ENCODE measurements at regions of chr17 and their contacts with region 1.

Region 1: GRCh38 chr17:31449746-31450145 is 58.3 kb downstream of the RAB11FIP4 start:
- H3K4me3 Mint-ChIP-seq: no peak overlapping the region
- H3K27ac Mint-ChIP-seq: no peak overlapping the region
- H3K4me1 Mint-ChIP-seq: peaks cover 42% of the 10 kb centered on the region
- H3K27me3 Mint-ChIP-seq: peaks cover 12% of the 10 kb centered on the region

Region 2: DNA sequence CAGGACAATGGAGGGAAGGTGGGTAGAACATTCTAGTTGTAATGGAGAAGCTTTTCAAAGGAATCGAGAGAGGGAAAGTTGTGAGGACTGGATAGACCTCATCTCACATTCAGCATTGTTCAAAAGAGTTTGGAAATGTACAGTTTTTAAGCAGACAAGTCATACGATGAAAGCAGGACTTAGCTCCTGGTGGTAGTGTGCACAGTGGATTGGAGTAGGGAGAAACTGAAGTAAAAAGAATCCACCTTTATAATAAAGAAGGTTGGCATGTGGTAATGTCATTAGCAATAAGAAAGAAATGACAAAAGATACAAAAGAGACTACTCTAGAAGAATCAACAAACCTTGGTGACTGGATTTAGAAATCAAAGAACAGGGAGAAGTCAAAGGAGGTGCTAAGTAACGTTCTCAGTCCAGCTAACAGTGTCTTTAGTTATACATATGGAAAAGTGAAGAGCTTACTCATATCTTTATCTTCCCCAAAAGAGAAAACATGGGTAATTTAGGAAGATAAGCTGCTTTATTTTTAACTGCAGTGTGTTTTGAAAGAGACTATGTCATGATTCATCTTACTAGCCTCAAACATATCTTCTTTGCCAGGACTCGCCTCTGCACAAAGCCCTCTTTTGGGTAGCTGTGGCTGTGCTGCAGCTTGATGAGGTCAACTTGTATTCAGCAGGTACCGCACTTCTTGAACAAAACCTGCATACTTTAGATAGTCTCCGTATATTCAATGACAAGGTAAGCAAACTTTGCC is 109.7 kb before region 1 on chr17:
- intact Hi-C with region 1: no loop called
- H3K4me3 Mint-ChIP-seq: no peak overlapping the region
- H3K27ac Mint-ChIP-seq: no peak overlapping the region
- H3K4me1 Mint-ChIP-seq: peaks cover 11% of the 10 kb centered on the region
- H3K27me3 Mint-ChIP-seq: no peaks in the 10 kb centered on the region

Region 3: DNA sequence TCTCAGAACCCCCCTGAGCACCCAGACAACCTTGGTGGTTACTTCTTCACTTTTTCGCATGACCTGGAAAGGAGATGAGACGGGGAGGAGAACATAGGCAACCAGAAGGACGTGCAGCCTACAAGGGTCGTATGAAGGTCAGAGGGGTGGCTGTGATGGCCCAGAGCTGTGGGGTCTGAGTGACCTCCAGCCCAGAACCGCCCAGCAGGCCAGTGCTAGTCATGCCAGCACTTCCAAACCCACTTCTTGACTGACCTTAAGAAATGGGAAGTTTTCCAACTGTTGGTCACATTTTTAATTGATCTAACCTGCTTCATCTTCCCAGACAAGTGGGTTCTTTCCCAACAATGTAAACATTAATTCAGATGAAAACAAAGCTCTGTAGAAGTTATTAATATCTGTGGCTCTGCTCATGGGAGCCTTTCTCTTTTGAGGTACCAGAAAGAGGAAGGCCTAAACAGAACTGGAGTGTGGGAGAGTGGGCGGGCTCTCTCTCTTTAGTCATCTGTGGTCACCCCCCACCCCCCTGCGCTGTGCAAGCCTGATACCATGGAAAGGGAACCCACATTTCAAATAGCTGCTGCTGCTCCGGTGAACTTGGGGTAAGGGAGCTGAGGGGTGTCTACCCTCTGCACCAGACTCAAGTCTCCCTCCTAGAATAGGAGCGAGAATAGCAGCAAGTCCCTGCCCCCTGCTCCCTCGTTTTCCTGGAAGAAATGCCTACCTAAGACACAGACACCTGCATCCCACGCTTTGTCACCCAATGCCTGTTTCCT is 43.3 kb after region 1 on chr17:
- intact Hi-C with region 1: loop called (anchors 2 kb)
- H3K4me3 Mint-ChIP-seq: peak overlapping the region; percentile 50
- H3K27ac Mint-ChIP-seq: peak overlapping the region; percentile 74
- H3K4me1 Mint-ChIP-seq: peaks cover 87% of the 10 kb centered on the region
- H3K27me3 Mint-ChIP-seq: peaks cover 19% of the 10 kb centered on the region

Region 4: DNA sequence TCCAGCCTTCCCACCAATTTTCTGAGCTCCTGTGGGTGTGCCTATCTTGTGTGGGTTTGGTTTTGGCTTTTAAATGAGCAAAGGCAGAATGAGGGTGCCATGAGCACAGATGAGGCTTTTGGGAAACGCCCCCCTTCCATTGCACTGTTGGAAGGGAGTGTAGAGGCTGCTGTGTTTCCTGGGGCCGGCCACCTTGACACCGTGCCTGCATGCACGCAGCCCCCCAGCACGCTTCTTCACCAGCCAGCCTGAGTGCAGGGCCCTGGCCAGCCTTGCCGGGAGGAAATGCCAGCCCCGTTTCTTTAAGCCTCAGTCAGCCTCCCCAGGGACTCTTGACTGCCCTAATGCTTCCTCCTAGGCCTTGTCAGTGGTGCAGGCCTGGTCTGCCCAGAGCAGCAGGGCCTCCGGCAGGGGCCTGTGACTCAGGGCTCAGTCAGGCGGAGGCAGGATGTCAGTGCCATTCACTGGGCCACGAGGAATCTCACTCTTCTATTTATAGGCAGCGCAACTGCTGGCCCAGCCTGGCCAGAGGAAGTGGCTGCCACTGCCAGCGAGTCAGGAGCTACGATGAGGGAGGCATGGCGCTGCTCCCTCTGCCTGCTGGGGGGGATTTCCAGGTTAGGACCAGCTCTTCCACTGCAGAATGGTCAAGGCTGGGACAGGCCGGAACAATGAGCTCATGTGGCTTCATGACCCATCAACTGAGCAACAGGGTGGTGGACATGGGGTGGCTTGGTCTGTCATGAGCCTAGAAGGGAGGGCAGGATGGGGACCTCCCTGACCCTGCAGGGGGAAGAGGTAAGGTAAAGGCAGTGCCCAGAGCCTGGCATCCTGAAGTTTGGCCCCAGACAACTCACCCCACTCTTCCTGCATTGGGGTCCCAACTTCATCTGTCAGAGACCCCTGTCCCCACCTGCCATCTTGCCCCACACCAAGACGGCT is 146.9 kb after region 1 on chr17:
- intact Hi-C with region 1: no loop called
- H3K4me3 Mint-ChIP-seq: no peak overlapping the region
- H3K27ac Mint-ChIP-seq: peak overlapping the region; percentile 80
- H3K4me1 Mint-ChIP-seq: peaks cover 35% of the 10 kb centered on the region
- H3K27me3 Mint-ChIP-seq: no peaks in the 10 kb centered on the region

Measured in dendritic cell treated with granulocyte-macrophage colony-stimulating factor and Interleukin-4, amounts not matched to agents 40 ng/mL and 50 ng/mL, for 4 days (primary cell).